Activated T-helper 2 cell treated with anti-CD3 and anti-CD28 coated beads, Interferon-gamma antibody, Interleukin-2, Interleukin-4, amounts not matched to agents 10 μg/mL and 5 μg/mL and 100 μg/mL, durations not matched to agents 14 hours and 24 hours and 36 hours (primary cell): ENCODE measurements at regions of chr6 and their contacts with region 1.

Region 1: DNA sequence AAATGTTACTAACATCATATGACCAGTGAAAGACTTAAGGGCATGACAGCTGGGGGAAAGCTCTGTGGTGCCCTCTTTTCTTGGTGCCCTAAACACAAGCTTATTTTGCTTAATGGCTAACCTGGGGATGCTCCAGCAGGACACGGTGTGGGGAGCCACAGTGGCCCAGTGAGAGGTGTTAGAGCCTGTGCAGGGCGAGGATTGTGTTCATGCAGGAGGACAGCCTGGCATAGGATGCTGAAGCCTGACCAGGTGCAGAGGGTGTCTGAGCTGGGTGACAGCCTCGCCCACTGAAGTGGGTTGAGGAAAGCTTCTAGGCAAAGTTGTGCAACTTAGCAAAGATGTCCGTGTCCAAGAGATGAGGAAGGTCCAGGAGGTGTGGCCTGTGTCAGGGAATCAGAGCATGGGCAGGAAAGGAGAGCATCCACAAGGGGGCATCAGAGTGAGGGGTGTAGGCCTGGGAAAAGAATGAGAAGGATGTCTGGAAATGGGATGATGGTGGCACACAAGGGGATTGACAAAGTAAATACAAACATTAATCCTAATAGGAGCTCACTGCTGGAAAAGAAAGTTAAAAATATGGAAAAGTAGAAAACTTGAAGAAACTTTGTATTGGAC is 33.9 kb downstream of the SLC17A4 start:
- DNase-seq: peak; percentile 17
- H3K4me3 Mint-ChIP-seq: no peak overlapping the region
- H3K27ac Mint-ChIP-seq: peak overlapping the region; percentile 2
- H3K4me1 Mint-ChIP-seq: peaks cover 21% of the 10 kb centered on the region
- H3K27me3 Mint-ChIP-seq: no peaks in the 10 kb centered on the region

Region 2: DNA sequence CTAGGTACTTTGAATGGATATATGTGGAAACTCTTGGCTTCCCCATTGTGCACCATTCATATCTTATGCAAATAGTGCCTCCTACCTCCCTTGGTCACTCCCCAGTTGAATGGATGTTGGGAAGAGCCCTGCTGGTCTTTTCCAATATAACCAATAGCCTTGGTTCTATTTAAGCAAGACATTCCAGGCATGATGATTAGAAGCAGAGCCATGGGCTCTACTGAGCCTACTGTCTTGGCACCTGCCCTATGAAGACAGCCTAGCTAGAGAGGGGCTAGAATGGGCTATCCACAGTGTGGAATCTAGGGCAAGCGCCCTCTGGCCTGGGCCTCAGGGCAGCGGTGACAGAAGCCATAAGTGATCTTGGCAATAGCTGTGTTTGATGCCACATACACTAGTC is 27.8 kb after region 1 on chr6:
- intact Hi-C with region 1: no loop called
- DNase-seq: no peak
- H3K4me3 Mint-ChIP-seq: no peak overlapping the region
- H3K27ac Mint-ChIP-seq: no peak overlapping the region
- H3K4me1 Mint-ChIP-seq: peaks cover under 1% of the 10 kb centered on the region
- H3K27me3 Mint-ChIP-seq: peaks cover 6% of the 10 kb centered on the region

Region 3: DNA sequence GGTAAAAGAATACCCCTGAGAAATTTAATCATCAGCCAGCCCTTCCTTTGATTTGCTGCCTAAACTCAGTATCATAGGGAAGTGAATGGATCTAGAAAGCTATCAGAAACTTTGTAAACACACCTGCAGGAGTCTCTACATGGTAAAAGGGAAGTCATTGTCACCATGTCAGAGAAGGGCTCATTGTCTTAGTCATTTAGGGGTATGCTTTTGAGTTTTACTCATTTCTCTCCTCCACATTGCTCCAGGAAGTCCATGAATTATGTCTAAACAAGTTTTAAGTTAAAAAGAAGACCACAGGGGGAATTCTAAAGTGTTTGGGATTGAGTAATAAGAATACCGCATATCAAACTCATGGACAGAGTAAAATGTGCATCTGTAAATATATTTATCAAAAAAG is 41.0 kb after region 1 on chr6:
- intact Hi-C with region 1: loop called (anchors 2 kb)
- DNase-seq: no peak
- H3K4me3 Mint-ChIP-seq: no peak overlapping the region
- H3K27ac Mint-ChIP-seq: no peak overlapping the region
- H3K4me1 Mint-ChIP-seq: peaks cover 8% of the 10 kb centered on the region
- H3K27me3 Mint-ChIP-seq: peaks cover 8% of the 10 kb centered on the region

Region 4: DNA sequence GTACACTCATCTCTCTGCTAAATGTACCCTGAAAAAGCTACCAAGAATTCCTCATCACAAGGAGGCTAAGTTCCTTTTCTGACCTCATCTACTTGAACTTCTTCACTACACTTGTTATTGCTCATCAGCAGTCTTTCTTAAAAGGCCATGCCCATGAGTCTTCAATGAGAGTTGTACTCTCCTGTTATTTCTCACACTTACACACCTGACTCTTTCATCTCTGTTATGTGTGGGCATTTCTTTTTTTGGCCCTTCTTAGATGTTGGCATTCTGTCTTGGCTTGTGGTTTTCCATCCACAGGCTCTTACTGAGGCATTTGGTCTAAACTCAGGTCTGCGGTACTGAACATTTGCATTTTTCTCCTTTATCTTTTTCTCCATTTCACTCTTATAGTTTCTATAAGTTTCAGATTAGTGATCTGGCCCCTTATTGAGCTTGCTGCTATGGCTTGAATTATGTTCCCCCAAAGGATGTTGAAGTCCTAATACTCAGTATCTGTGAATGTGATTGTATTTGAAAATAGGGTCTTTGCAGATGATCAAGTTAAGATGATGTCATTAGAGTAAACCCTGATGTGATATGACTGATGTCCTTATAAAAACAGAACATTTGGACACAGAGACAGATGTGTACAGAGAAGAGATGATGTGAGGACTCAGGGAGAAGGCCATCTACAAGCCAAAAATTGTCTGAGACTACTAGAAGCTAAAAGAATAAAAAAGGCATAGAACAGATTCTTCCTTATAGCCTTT is 54.3 kb after region 1 on chr6:
- intact Hi-C with region 1: loop called (anchors 5 kb)
- DNase-seq: no peak
- H3K4me3 Mint-ChIP-seq: no peak overlapping the region
- H3K27ac Mint-ChIP-seq: no peak overlapping the region
- H3K4me1 Mint-ChIP-seq: no peaks in the 10 kb centered on the region
- H3K27me3 Mint-ChIP-seq: no peaks in the 10 kb centered on the region

Region 5: DNA sequence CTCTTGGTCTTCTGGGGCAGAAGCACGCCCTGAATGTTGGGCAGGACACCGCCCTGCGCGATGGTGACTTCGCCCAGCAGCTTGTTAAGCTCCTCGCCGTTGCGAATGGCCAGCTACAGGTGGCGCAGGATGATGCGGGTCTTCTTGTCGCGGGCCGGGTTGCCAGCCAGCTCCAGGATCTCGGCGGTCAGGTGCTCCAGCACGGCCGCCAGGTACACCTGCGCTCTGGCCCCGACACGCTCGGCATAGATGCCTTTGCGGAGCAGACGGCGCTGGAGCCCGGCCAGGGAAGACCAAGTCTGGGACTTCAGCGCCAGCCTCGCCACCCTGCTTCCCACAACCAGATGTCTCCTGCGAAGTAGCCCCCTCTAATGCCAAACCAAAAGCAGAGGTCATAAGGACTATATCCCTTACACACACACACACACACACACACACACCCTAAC is 93.7 kb after region 1 on chr6:
- intact Hi-C with region 1: loop called (anchors 5 kb)
- DNase-seq: peak; percentile 47
- H3K4me3 Mint-ChIP-seq: peak overlapping the region; percentile 85
- H3K27ac Mint-ChIP-seq: peak overlapping the region; percentile 73
- H3K4me1 Mint-ChIP-seq: peaks cover 13% of the 10 kb centered on the region
- H3K27me3 Mint-ChIP-seq: no peaks in the 10 kb centered on the region